ENCODE measurements at regions of chr15 and their contacts with region 1.

Region 1: GRCh38 chr15:85504749-85505676 is 124.6 kb downstream of the AKAP13 start:
- DNase-seq: peak in 1 of 2 donors; percentile 43
- H3K4me3 ChIP-seq: no peak overlapping the region
- H3K27ac ChIP-seq: no peak overlapping the region
- H3K4me1 ChIP-seq: peaks cover 0 to 7% (median 4%) of the 10 kb centered on the region in 4 donors
- H3K27me3 ChIP-seq: no peaks in the 10 kb centered on the region
- CTCF ChIP-seq: peak; percentile 39 to 48

Region 2: GRCh38 chr15:84840741-84841429 is 664.1 kb before region 1 on chr15:
- intact Hi-C with region 1: no loop called
- DNase-seq: peak; percentile 79 to 95
- H3K4me3 ChIP-seq: no peak overlapping the region
- H3K27ac ChIP-seq: peak overlapping the region; percentile 86 to 96
- H3K4me1 ChIP-seq: peaks cover 3 to 82% (median 40%) of the 10 kb centered on the region in 4 donors
- H3K27me3 ChIP-seq: no peaks in the 10 kb centered on the region
- CTCF ChIP-seq: peak in 1 of 2 experiments; percentile 12

Region 3: GRCh38 chr15:85330901-85331588 is 174.0 kb before region 1 on chr15:
- intact Hi-C with region 1: loop called (anchors 5 kb)
- DNase-seq: peak; percentile 94 to 96
- H3K4me3 ChIP-seq: no peak overlapping the region
- H3K27ac ChIP-seq: peak overlapping the region; percentile 79 to 84
- H3K4me1 ChIP-seq: peaks cover 0 to 23% (median 11%) of the 10 kb centered on the region in 4 donors
- H3K27me3 ChIP-seq: no peaks in the 10 kb centered on the region
- CTCF ChIP-seq: peak; percentile 83 to 84

Region 4: DNA sequence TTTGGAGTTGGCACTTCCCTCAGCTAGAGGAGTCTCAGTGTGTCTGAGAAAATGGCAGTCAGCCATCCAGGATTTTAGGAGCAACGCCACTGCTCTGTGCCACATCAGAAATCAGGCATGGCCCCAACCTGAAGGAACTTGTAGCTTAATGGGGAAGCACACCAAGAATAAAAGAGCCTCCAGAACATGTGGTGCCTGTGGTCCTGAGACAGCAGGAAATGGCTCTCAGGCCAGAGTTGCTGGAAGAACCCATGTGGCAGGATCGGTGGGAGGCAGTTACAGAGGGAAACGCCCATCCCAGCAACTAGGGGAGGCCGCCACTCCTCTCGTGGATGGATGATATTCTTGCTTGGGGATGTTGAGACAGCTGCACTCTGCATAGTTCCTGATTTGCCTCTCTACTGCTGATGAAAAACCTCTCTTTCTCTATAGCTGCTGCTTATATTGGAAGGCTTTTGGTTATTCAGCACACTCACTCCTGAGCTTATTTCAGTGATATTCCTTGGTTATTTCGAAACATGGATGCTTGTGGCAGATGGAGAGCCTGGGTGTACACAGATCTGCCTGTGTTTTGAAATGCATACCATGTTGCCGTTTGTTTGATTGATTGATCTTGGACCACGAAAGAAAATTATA is 237.3 kb after region 1 on chr15:
- intact Hi-C with region 1: no loop called
- DNase-seq: peak in 1 of 2 donors; percentile 16
- H3K4me3 ChIP-seq: no peak overlapping the region
- H3K27ac ChIP-seq: peak overlapping the region; percentile 31 to 50
- H3K4me1 ChIP-seq: peaks cover 0 to 8% (median 7%) of the 10 kb centered on the region in 4 donors
- H3K27me3 ChIP-seq: no peaks in the 10 kb centered on the region
- CTCF ChIP-seq: no peak